Stomach (tissue), 19 donors: ENCODE measurements at regions of chr10 and their contacts with region 1.

Region 1: GRCh38 chr10:30247704-30248103 is 101.4 kb downstream of the MTPAP start:
- DNase-seq: peak in 1 of 2 donors; percentile 19
- H3K4me3 ChIP-seq: no peak overlapping the region
- H3K27ac ChIP-seq: no peak overlapping the region
- H3K4me1 ChIP-seq: no peaks in the 10 kb centered on the region
- H3K27me3 ChIP-seq: no peaks in the 10 kb centered on the region
- CTCF ChIP-seq: no peak
- EP300 ChIP-seq: no peak
- POLR2A ChIP-seq: no peak

Region 2: GRCh38 chr10:29998142-29998808 is 249.4 kb before region 1 on chr10:
- intact Hi-C with region 1: loop called (anchors 10 kb)
- DNase-seq: peak; percentile 80 to 93
- H3K4me3 ChIP-seq: no peak overlapping the region
- H3K27ac ChIP-seq: no peak overlapping the region
- H3K4me1 ChIP-seq: peaks cover 0 to 31% (median 15%) of the 10 kb centered on the region in 4 donors
- H3K27me3 ChIP-seq: peaks cover 0 to 7% (median 0%) of the 10 kb centered on the region in 3 donors
- CTCF ChIP-seq: peak in 5 of 7 experiments; percentile 87 to 96 (median 91)
- EP300 ChIP-seq: no peak
- POLR2A ChIP-seq: no peak

Region 3: GRCh38 chr10:30687698-30688219 is 440.1 kb after region 1 on chr10:
- intact Hi-C with region 1: no loop called
- DNase-seq: peak; percentile 67 to 88
- H3K4me3 ChIP-seq: no peak overlapping the region
- H3K27ac ChIP-seq: no peak overlapping the region
- H3K4me1 ChIP-seq: peaks cover 0 to 7% (median 0%) of the 10 kb centered on the region in 4 donors
- H3K27me3 ChIP-seq: peaks cover 0 to 18% (median 0%) of the 10 kb centered on the region in 3 donors
- CTCF ChIP-seq: peak in 5 of 7 experiments; percentile 37 to 85 (median 75)
- EP300 ChIP-seq: no peak
- POLR2A ChIP-seq: no peak